Mucosa of descending colon (tissue), 3 donors: ENCODE measurements at regions of chr9 and their contacts with region 1.

Region 1: DNA sequence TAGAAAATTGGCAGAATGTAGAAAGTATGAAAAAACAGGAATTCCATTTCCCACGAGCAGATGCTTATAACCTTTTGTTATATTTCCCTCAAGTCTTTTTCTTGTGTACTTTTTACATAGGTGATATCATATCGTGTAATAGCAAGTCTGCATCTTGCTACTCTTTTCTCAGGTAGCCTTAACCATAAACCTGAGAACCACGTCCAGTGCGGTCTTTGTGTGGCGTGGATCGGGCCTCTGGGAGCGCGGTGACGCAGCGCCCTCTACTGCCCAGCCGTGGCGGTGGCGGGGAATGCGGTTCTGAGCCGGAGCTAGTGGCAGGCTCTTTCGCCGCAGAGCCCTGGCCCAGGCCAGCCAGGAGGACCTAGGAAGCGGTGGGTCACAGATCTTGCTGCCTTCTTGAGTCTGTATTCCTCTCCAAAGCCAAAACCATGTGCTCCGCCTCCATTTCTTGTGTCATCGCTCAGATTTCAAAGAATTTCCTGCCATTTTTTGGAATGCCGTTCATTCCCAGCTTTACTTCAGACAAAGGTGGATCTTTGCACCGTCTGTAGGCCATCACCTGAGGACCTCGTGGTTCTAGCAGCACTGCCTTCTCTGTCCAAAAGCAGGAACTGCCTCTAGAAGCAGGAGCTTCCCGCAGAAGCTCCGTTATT is 71.9 kb downstream of the MVB12B start:
- DNase-seq: peak; percentile 81 to 91 (median 89)
- ATAC-seq: peak; percentile 88
- H3K4me3 ChIP-seq: no peak overlapping the region
- H3K4me1 ChIP-seq: peaks cover 5% of the 10 kb centered on the region
- CTCF ChIP-seq: peak; percentile 91

Region 2: DNA sequence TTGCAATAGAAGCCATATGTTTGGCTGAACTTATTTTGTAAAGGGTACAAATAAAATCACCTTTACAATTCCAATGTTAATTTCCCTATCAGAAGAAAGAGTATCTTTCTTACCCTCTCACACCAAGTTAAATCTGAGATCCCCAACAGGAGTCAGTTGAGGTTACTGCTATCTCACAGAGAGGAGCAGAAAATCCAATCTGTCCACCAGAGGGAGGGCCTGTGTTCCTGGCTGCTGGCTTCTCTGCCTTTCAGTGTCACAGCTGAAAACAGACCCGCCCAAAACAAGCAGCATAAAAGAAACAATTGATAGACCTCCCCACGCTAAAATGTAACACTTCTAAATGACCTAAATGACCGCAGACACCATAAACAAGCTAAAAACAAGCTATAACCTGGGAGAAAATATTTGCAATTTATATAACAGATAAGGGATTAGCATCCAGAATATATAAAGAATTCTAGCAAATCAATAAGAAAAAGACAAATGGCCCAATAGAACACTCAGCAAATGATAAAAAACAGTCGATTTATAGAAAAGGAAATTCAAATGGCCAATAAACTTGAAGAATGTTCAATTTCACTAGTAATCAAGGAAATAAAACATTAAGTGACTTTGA is 96.4 kb before region 1 on chr9:
- intact Hi-C with region 1: loop called in 1 of 2 experiments (anchors 5 kb)
- DNase-seq: peak in 2 of 3 donors; percentile 47 to 84
- ATAC-seq: peak; percentile 68
- H3K4me3 ChIP-seq: no peak overlapping the region
- H3K4me1 ChIP-seq: peaks cover 11% of the 10 kb centered on the region
- CTCF ChIP-seq: peak; percentile 40

Region 3: DNA sequence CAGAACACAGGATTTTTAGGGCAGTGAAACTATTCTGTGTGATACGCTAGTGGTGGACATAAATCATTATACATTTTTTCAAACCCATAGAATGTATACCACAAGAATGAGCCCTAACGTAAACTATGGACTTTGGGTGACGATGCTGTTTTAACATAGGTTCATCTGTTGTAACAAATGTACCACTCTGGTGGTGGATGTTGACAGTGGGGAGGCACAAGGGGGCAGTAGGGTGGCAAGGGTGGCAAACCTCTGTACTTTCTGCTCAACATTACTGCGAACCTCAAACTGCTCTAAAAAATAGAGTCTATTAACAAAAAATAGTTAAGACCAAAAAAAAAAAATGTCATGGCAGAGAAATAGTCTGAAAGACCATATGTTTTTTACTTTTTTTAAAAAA is 81.0 kb before region 1 on chr9:
- intact Hi-C with region 1: loop called in 1 of 2 experiments (anchors 10 kb)
- DNase-seq: peak in 2 of 3 donors; percentile 62 to 69
- ATAC-seq: peak; percentile 67
- H3K4me3 ChIP-seq: no peak overlapping the region
- H3K4me1 ChIP-seq: no peaks in the 10 kb centered on the region
- CTCF ChIP-seq: no peak

Region 4: DNA sequence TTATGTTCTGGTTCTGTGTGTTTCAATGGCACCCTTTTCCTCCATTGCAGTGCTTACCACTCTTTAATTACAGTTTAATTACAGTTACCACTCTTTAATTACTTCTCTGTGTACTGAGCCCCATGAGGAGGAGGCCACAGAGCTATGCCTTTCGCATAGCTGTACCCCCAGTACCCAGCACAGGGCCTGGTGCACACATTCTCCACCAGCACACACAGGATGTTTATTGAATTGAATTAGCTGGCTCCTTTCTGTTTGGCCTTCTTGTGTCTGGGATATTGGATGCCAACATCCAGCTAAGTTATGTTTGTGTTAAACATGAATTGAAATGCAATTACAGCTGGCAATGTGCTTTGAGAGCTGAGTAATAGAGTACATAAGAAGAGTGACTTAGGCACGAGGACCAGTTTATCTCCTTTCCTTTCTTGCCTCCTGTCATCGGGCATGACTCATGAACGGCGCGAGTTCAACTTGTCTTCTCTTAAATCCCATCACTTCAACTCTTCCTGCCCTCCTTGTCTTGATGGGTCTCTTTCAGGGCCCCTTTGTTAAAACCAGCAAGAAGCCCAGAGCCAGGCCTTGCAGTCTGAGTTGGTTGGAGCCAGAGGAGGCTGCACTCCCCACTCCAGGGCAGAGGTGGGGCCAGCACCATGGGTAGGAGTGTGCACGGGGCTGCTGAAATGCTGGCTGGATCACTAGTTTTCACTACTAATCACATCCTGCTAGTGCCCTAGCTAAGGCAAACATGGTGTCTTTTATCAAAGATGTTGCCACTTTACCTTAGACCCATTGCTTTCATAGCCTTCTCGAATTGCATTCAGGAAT is 34.5 kb before region 1 on chr9:
- intact Hi-C with region 1: no loop called
- DNase-seq: peak in 2 of 3 donors; percentile 46 to 52
- ATAC-seq: peak; percentile 71
- H3K4me3 ChIP-seq: no peak overlapping the region
- H3K4me1 ChIP-seq: peaks cover 39% of the 10 kb centered on the region
- CTCF ChIP-seq: no peak

Region 5: DNA sequence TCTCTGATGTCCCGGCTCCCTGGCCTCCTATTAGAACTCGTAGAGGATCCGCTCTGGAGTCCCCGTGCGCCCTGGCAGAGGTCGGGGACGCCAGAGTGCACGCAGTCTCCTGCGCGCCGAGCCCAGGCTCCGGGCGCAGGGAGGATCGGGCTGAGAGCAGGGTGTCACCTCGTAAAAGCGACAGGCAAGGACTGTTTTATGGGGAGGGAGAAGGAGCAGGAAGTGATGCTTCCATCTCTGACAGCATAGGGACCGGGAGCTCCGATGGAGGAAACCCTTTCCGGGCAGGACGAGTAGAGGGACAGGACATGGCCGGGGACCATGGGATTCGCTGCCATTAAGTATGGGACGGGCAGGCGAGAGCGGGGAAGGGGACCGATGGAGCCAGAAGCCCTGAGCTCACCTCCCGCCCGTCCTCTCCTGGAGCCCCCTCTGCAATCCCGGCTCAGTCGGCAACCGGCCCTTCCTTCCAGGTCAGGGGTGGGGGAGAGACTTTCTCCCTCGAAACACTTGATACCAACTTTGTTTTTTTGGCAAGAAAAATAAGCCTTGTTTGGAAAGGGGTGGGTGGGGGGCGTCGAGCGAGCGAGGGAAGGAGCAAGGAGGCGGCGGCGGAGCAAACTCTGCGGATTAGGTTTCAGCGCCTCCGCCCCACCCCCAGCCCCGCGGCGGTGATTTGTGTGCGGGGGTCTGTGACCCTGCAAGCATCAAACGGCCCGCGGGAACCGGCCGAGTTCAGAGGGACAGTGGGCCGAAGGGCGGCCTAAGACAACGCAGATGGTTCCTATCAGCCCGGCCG is 227.8 kb after region 1 on chr9:
- intact Hi-C with region 1: no loop called
- DNase-seq: no peak
- ATAC-seq: peak; percentile 62
- H3K4me3 ChIP-seq: no peak overlapping the region
- H3K4me1 ChIP-seq: peaks cover 11% of the 10 kb centered on the region
- CTCF ChIP-seq: no peak

Region 6: GRCh38 chr9:126773004-126773607 is 374.6 kb after region 1 on chr9:
- intact Hi-C with region 1: no loop called
- DNase-seq: peak in 1 of 3 donors; percentile 20
- ATAC-seq: no peak
- H3K4me3 ChIP-seq: no peak overlapping the region
- H3K4me1 ChIP-seq: no peaks in the 10 kb centered on the region
- CTCF ChIP-seq: no peak